PC-9 (cell line): ENCODE measurements at regions of chr2 and their contacts with region 1.

Region 1: DNA sequence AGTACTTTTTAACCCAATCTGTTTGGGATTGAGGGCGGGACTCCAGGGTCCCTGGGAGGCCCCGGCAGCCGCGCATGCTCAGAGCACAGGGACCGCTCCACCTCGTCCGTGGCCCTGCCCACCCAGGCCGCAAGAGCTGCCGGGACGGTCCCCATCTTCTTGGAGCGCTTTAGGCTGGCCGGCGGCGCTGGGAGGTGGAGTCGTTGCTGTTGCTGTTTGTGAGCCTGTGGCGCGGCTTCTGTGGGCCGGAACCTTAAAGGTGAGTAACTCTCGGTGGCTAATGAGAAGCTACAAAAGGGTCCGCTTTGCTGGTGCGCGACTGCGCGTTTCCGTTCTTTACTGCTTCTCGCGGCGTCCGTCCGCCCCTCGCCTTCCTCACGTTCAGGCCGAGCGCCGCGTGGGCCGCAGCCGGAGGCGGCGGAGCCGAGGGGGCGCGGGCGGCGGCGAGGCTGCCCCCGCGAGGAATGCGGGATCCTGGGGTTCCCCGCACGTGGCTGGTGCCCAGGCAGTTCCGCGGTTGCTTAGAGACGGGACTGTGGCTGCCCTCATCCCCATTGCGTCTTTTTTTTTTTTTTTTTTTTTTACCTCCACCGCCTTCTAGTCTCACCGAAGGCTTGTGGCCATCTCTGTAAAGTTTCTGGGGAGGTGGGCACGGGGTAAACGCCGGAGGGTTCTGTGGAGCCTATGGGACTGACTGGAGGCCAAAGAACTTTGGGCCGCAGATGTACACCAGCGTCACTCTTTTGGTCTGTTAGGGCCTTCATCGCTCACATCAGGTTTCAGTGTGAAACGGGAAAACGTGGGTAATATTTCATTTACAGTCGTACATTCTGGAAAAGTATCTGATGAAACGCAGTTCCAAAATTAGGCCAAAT is at the start of gene SSB:
- DNase-seq: peak; percentile 81 to 84
- H3K4me3 ChIP-seq: peak within 1 kb of the TSS; percentile 94
- H3K27ac ChIP-seq: peak within 1 kb of the TSS; percentile 79
- H3K4me1 ChIP-seq: no peaks in the 10 kb centered on the region
- H3K27me3 ChIP-seq: no peaks in the 10 kb centered on the region
- CTCF ChIP-seq: no peak
- total RNA-seq, gene SSB: 53.8 and 71.3 TPM in 2 replicates

Region 2: GRCh38 chr2:169452080-169452479 is 346.9 kb before region 1 on chr2:
- CTCF ChIA-PET with region 1: interaction called, 20 read pairs
- POLR2A ChIA-PET with region 1: no interaction called
- intact Hi-C with region 1: no loop called
- DNase-seq: no peak
- H3K4me3 ChIP-seq: no peak overlapping the region
- H3K27ac ChIP-seq: no peak overlapping the region
- H3K4me1 ChIP-seq: no peaks in the 10 kb centered on the region
- H3K27me3 ChIP-seq: no peaks in the 10 kb centered on the region
- CTCF ChIP-seq: peak; percentile 63

Region 3: GRCh38 chr2:169664978-169665930 is 133.7 kb before region 1 on chr2:
- CTCF ChIA-PET with region 1: no interaction called
- POLR2A ChIA-PET with region 1: interaction called, 10 read pairs
- intact Hi-C with region 1: no loop called
- DNase-seq: no peak
- H3K4me3 ChIP-seq: no peak overlapping the region
- H3K27ac ChIP-seq: no peak overlapping the region
- H3K4me1 ChIP-seq: no peaks in the 10 kb centered on the region
- H3K27me3 ChIP-seq: no peaks in the 10 kb centered on the region
- CTCF ChIP-seq: no peak

Region 4: DNA sequence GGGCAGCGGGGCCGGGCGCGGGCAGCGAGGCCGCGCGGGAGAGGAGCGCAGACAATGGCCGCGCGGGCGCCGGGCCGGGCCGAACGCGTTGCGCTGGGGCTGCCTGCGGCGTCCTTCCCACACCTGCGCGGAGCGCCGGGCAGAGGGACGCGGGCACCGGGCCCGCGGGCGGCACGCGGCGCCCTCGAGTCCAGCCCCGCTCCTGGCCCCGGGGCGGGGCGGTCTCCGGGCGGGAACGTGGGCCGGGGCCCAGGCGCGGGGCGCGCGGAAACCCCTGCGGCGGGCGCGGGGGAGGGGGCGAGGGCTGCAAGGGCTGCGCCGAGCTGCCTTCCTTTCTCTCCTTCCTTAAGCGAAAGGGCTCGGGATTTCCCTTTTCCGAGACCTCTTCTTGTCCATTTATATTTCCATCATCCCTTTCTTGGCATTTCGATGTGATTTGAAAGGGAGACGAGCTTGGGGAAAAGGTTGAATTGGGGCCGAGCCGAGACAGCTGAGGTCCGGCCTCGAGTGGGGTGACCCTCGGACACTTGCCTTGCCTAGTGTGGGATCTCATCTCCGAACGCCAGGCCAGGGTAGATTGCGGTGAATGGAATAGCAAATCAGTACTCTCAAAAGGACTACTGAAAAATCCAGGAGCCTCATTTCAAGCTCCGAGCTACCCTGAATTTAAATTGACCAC is 64.6 kb before region 1 on chr2:
- CTCF ChIA-PET with region 1: no interaction called
- POLR2A ChIA-PET with region 1: no interaction called
- intact Hi-C with region 1: no loop called
- DNase-seq: peak in 1 of 2 experiments; percentile 12
- H3K4me3 ChIP-seq: peak overlapping the region; percentile 76
- H3K27ac ChIP-seq: no peak overlapping the region
- H3K4me1 ChIP-seq: peaks cover 9% of the 10 kb centered on the region; the same call in 1 of the 2 replicates
- H3K27me3 ChIP-seq: no peaks in the 10 kb centered on the region
- CTCF ChIP-seq: no peak

Region 5: GRCh38 chr2:169775765-169776164 is 23.2 kb before region 1 on chr2:
- CTCF ChIA-PET with region 1: no interaction called
- POLR2A ChIA-PET with region 1: interaction called, 23 read pairs
- intact Hi-C with region 1: no loop called
- DNase-seq: no peak
- H3K4me3 ChIP-seq: no peak overlapping the region
- H3K27ac ChIP-seq: no peak overlapping the region
- H3K4me1 ChIP-seq: no peaks in the 10 kb centered on the region
- H3K27me3 ChIP-seq: no peaks in the 10 kb centered on the region
- CTCF ChIP-seq: no peak

Region 6: DNA sequence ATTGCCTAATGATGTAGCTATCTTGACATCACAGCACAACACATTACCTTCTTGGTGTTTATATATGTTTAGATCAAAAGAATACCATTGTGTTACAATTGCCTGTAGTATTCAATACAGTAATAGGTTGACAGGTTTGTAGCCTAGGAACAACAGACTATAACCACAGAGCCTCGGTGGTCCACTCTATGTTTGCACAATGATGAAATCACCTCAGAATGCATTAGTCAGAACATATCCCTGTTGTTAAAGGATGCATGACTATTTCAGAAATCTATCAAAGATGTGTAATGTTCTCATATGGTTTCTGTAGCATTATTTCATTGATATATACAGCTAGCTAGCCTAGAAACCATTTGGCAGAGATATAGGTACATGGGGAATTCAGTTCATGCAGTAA is 16.9 kb after region 1 on chr2:
- CTCF ChIA-PET with region 1: interaction called, 3 read pairs
- POLR2A ChIA-PET with region 1: interaction called, 18 read pairs
- intact Hi-C with region 1: no loop called
- DNase-seq: peak in 1 of 2 experiments; percentile 62
- H3K4me3 ChIP-seq: no peak overlapping the region
- H3K27ac ChIP-seq: no peak overlapping the region
- H3K4me1 ChIP-seq: no peaks in the 10 kb centered on the region
- H3K27me3 ChIP-seq: no peaks in the 10 kb centered on the region
- CTCF ChIP-seq: no peak

Region 7: DNA sequence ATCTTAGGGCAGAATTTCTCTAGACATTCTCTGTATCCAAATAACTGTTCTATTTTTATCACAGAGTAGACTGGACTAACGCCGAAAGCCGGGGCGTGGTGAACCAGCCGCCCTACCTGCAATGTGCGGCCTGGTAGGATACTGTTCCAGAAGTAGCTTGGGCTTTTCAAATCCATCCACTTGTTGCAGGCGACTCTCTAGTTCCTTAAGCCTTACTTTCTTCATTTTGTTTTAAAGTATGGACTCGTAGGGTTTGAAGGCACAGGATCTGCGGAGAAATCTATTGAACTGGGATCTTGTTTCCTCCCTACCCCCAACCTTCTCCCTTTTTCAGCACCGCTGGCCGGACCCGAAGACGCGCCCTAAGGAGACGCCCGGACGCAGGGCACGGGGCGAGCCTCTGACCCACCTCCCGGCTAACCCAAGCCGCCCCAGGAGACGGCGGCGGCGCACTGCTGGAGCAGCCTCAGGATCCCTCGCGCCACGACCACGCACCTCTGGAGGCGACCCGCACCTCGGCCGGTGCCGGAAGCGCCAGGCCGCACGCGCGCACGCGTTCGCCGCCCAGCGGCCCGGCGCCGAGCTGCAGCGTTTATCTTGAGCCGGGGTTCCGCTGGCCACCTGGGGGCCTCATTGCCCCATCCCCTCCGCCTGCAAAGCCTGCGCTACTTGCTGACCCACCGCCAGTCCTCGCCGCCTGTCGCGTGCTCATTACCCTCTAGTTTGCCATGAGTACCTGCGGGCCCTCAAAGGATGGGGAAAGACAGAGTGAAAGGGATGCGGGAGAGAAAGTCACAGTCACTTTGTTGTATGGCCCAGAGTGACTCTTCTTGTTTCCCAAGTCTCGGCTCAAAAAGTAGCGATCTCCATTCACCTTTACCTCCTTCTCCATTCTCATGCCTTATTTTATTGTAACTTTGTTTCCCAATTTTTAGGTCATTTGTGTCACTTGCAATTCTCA is 25.7 kb after region 1 on chr2 and contains the start of gene METTL5:
- CTCF ChIA-PET with region 1: no interaction called
- POLR2A ChIA-PET with region 1: no interaction called
- intact Hi-C with region 1: loop called (anchors 2 kb)
- DNase-seq: peak; percentile 48 to 77
- H3K4me3 ChIP-seq: peak within 1 kb of the TSS; percentile 57
- H3K27ac ChIP-seq: peak within 1 kb of the TSS; percentile 20; the same call in 1 of the 2 replicates
- H3K4me1 ChIP-seq: peaks cover 25% of the 10 kb centered on the region; the same call in 1 of the 2 replicates
- H3K27me3 ChIP-seq: no peaks in the 10 kb centered on the region
- CTCF ChIP-seq: peak; percentile 74; the same call in 1 of the 2 replicates
- total RNA-seq, gene METTL5: 51.1 and 61.4 TPM in 2 replicates